GM13977 (cell line): ENCODE measurements at regions of chr17 and their contacts with region 1.

Region 1: GRCh38 chr17:78497115-78497540 is 80.1 kb downstream of the DNAH17 start:
- DNase-seq: peak; percentile 88
- CTCF ChIP-seq: peak; percentile 86

Region 2: DNA sequence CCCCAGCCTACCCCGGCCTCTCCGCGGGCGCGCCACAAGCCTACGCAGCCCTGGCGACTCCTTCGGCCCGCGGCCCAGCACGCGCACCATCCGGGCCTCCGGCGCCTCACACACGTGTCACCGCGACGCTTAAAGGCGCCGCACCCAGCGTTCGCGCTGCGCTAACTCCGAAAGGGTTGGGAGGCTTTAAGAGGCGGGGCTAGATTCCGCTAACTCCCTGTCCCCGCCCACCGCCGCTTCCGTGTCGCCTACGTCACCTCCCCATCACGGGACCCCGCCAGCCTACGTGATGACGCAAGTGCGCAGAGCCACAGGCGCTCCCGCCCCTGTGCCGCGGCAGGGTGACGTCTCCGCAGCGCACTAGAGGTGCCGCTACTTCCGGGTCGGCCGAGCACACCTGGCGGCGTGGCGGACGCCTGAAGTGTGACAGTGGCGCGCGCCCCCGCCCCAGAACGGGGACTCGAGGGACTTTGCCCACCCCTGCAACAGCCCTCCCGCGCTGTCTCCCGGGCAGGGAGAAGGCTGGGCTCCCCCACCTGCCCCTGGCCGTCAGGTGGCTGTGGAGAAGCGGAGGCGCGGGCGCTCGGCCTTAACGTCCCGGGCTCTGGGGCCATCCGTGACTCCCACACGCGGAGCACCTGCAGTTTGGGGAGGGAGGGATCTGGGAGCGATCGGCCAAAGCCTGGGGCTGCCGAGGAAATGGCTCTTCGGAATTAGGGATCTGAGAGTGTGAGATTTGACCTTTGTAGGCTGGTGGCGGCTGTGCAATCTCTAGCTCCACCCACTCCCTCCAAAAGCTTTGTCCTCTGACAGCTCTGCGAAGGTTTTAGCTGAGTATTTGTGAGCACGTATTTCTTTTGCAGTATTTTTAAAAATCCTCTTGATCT is 343.8 kb after region 1 on chr17 and contains the start of gene USP36:
- in situ Hi-C with region 1: loop called (anchors 25 kb)
- DNase-seq: peak; percentile 100
- CTCF ChIP-seq: no peak

Region 3: DNA sequence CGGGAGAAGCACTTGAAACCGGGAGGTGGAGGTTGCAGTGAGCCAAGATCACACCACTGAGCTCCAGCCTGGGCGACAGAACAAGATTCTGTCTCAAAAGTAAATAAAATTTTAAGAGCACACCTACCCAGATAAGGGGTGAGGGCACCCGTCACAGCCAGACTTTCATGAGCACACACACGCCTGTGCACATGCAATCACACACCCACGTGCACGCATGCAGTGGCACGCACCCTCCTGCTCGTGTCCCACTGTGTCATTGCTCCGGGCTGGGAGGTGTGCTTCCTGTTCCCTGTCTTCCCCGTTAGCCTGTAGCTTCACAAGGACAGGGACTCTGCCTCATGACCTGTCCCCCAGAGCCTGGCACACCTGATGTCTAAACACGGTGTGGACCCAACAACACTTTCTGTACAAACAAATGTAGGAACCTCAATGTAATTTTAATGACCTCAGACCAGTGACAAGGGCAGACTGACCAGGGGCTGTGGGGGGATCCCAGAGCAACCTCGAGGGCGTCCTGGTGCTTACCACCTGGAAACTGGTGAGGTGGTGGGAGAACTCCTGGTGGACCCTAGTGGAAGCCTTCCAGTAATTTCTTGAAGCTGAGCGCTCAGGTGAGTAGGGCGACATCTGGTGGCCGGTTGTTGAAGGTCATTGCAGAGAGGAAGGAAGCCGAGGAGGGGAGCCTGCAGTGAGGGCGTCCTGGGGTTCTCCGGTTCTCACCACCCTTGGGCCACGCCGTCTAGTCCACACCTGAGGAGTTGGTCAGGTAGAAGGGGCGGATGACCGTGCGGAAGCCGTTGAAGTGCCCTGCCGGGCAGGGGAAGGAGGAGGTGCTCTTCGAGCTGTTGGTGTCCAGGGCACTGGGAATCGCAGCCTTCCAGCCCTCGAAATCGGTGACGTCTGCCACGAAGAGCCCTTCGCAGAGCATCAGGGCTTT is 474.0 kb after region 1 on chr17:
- in situ Hi-C with region 1: loop called (anchors 25 kb)
- DNase-seq: peak; percentile 89
- CTCF ChIP-seq: peak; percentile 92